Right cardiac atrium (tissue), 5 donors: ENCODE measurements at regions of chr3 and their contacts with region 1.

Region 1: DNA sequence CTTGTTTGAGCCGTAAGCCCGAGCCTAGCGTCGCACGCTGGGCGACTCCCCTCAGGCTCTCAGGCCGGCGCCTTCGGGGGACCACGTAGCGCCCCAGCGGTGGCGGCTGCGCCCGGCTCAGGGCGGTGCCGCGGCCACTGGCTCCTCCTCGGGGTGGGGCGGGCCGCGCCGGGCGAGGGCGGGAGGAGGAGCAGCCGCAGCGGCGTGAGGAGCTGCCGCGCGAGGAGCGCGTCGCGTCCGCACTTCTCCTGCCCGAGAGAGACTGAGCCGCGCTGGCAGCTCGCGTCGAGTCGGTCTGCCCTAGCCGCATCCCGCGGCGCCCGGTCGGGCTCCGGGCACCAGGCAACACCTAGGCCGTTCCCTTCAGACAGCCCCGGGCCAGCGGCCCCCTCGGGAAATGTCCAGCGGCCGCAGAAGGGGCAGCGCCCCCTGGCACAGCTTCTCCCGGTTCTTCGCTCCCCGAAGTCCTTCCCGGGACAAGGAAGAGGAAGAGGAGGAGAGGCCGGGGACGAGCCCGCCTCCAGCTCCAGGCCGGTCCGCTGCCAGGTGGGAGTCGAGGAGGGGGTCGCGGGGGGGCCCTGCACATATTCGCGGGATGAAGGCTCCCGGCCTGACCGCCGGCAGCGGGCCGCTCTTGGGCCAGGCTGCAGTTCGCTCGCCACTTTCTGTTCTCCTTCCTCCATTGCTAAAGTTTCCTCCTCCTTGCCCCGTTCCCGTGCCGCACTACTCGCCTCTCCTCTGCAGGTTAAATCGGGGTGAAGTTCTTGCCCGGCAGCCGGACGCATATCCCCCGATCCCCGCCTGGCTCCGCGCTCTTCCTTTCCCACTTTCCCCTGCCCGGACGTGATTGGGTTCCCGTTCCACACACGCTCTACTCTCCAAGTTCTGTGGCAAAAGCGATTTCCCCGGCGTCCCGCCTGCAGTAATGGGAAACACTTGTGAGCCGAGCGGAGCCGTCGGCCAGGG is at the start of gene CRYBG3:
- DNase-seq: peak; percentile 87 to 95 (median 95)
- ATAC-seq: peak; percentile 99 to 100
- H3K4me3 ChIP-seq: peak within 1 kb of the TSS; percentile 80
- H3K27ac ChIP-seq: peak within 1 kb of the TSS; percentile 82
- H3K4me1 ChIP-seq: peaks cover 3% of the 10 kb centered on the region
- H3K27me3 ChIP-seq: no peaks in the 10 kb centered on the region
- total RNA-seq, gene CRYBG3: 21.1 to 23.4 (median 23.0) TPM

Region 2: DNA sequence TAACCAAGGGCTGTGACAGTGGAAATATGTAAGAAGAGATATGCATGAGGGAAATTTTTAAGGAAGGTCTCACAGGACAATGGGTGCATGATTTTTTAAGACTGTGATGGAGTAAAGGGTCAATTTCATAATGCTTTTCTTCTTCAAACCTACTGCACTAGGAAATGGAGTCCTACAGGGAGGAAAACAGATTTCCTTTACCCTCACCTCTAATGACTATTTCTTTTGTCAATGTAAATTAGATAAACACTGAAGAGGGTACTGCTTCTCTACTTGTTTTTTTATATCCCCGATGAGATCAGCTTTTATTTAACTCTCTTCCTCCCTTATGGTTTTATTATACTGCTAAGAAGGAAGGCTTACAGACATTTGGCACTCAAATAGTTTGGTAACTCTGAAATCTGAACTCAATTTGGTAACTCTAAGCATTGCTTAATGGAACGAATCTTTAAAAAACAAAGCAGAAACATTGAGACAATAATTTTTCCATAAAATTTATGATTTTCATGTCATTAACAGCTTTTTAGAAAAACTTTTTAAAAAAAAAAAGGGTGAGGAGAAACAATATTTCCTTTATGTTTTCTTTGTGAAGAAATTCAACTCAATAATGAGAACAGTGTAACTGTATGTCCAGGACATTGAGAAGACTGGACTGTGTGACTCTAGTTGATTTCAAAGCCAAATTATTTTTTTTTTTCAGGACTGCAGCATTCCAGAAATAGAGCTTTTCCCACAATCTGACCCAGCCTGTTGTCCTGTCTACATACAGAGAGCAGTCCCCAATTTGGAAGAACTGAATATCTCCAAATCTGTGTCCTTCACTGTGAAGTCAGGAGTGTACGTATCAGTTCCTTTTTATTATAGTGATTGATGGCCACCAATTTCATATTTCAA is 64.1 kb after region 1 on chr3:
- intact Hi-C with region 1: loop called in 1 of 4 experiments (anchors 5 kb)
- DNase-seq: no peak
- ATAC-seq: peak in 1 of 2 donors; percentile 75
- H3K4me3 ChIP-seq: no peak overlapping the region
- H3K27ac ChIP-seq: no peak overlapping the region
- H3K4me1 ChIP-seq: peaks cover 4% of the 10 kb centered on the region
- H3K27me3 ChIP-seq: no peaks in the 10 kb centered on the region

Region 3: GRCh38 chr3:97940034-97940433 is 117.9 kb after region 1 on chr3:
- intact Hi-C with region 1: loop called in 1 of 4 experiments (anchors 10 kb)
- DNase-seq: no peak
- ATAC-seq: peak; percentile 31 to 43
- H3K4me3 ChIP-seq: no peak overlapping the region
- H3K27ac ChIP-seq: no peak overlapping the region
- H3K4me1 ChIP-seq: no peaks in the 10 kb centered on the region
- H3K27me3 ChIP-seq: no peaks in the 10 kb centered on the region

Region 4: DNA sequence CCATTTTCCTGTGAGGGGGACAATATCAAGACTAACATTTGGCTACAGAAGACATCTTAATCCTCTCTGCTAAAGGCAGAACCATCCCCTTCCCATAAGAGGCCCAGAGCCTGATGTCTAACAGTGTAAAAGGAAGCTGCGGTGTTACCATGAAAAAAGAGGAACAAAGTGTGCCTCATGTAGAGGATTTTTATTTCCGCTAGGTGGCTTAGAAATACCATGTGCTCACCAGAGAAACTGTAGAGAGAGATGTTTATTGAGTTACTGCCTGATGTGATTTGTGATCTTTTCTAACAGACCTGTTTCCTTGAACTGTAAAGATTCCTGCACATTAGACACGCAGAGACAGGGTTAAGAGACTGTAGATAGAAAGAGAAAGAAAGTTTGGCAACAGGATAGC is 366.5 kb after region 1 on chr3:
- intact Hi-C with region 1: no loop called
- DNase-seq: no peak
- ATAC-seq: no peak
- H3K4me3 ChIP-seq: no peak overlapping the region
- H3K27ac ChIP-seq: no peak overlapping the region
- H3K4me1 ChIP-seq: no peaks in the 10 kb centered on the region
- H3K27me3 ChIP-seq: no peaks in the 10 kb centered on the region

Region 5: DNA sequence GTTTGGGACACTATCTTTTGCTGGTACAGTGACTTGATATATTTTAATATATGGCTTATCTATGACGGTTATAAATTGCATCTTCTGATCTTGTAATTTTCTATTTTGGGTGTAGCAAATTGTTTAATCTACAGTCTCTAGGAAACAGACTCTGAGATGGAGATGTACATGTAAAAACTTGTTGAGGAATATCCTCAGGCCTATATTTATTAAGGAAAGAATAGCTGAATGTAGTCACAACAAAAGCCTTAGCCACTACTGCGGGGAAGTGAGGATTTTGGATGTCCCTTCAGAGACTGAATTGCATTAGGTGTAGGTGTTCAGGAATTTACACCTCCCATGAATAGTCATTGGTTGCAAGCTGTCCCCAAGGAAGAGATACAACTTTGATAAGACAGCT is 554.5 kb after region 1 on chr3:
- intact Hi-C with region 1: no loop called
- DNase-seq: no peak
- ATAC-seq: no peak
- H3K4me3 ChIP-seq: no peak overlapping the region
- H3K27ac ChIP-seq: no peak overlapping the region
- H3K4me1 ChIP-seq: no peaks in the 10 kb centered on the region
- H3K27me3 ChIP-seq: no peaks in the 10 kb centered on the region